CD8-positive, alpha-beta T cell (primary cell): ENCODE measurements at regions of chr1 and their contacts with region 1.

Region 1: DNA sequence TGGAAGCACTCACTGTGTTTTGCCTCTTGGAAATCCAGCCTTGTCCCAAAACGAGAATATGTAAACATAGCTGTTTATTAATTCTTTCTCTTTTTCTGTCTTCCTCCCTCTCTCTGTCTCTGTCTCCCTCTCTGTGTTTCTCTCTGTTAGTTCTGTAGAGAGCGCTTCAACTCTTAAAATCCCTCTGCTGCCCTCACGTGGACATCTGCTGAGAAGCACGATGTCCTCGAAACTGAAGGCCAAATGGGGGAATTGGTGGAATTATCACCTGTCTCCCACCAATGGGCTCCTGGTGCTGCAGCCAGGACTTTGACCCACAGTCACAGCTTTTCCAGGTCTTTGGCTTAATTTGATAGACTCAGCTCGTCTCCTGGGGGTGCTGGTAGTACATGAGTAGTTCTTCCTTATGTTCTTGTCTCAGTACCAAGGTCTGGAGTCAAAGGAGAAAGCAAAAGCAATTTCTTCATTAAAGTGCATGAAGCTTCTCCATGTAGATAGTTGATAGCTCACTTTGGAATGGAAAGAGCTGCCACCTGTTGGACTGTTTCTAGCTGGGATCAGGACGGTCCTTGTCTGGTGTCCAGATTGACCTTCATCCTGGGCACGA is 5.5 kb upstream of the GBP6 start:
- DNase-seq: peak; percentile 70 to 88 (median 84)
- ATAC-seq: peak; percentile 96
- H3K4me3 ChIP-seq: no peak overlapping the region
- H3K4me3 Mint-ChIP-seq: peak overlapping the region; percentile 8
- H3K27ac ChIP-seq: no peak overlapping the region
- H3K27ac Mint-ChIP-seq: peak overlapping the region; percentile 1
- H3K4me1 ChIP-seq: peaks cover 7% of the 10 kb centered on the region
- H3K4me1 Mint-ChIP-seq: peaks cover 35% of the 10 kb centered on the region
- H3K27me3 ChIP-seq: no peaks in the 10 kb centered on the region
- H3K27me3 Mint-ChIP-seq: no peaks in the 10 kb centered on the region
- CTCF ChIP-seq: peak; percentile 95

Region 2: DNA sequence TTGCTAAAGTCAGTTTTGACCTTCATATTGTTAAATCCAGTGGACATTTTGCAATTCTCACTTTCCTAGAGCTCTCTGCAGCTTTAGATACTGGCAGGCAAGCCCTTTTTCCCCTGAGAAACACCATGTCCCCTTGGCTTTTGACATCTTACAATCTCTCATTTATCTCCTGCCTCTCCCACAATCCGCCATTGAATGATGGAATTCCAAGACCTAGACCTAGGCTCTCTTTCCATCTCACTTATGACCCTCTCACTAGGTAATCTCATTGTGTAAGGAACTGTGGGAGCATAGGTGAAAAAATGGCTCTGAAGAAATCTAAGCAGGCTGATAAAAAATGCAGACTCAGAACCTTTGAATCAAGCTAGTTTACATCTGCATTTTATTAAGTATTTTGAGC is 368.0 kb before region 1 on chr1:
- CTCF ChIA-PET with region 1: interaction called, 28 read pairs
- POLR2A ChIA-PET with region 1: no interaction called
- intact Hi-C with region 1: no loop called
- DNase-seq: no peak
- ATAC-seq: no peak
- H3K4me3 ChIP-seq: no peak overlapping the region
- H3K4me3 Mint-ChIP-seq: no peak overlapping the region
- H3K27ac ChIP-seq: peak overlapping the region in 1 of 2 experiments; percentile 17
- H3K27ac Mint-ChIP-seq: peak overlapping the region; percentile 77
- H3K4me1 ChIP-seq: peaks cover 22% of the 10 kb centered on the region
- H3K4me1 Mint-ChIP-seq: peaks cover 43% of the 10 kb centered on the region
- H3K27me3 ChIP-seq: no peaks in the 10 kb centered on the region
- H3K27me3 Mint-ChIP-seq: no peaks in the 10 kb centered on the region
- CTCF ChIP-seq: no peak

Region 3: GRCh38 chr1:89022167-89022959 is 336.0 kb before region 1 on chr1 and contains the start of gene GBP3:
- CTCF ChIA-PET with region 1: interaction called, 10 read pairs
- POLR2A ChIA-PET with region 1: no interaction called
- intact Hi-C with region 1: no loop called
- DNase-seq: peak in 3 of 9 experiments; percentile 14 to 73 (median 54)
- ATAC-seq: peak; percentile 83
- H3K4me3 ChIP-seq: peak within 1 kb of the TSS; percentile 52 to 59
- H3K4me3 Mint-ChIP-seq: peak within 1 kb of the TSS; percentile 89
- H3K27ac ChIP-seq: peak within 1 kb of the TSS; percentile 50 to 87
- H3K27ac Mint-ChIP-seq: peak within 1 kb of the TSS; percentile 94
- H3K4me1 ChIP-seq: peaks cover 23% of the 10 kb centered on the region
- H3K4me1 Mint-ChIP-seq: peaks cover 47% of the 10 kb centered on the region
- H3K27me3 ChIP-seq: no peaks in the 10 kb centered on the region
- H3K27me3 Mint-ChIP-seq: no peaks in the 10 kb centered on the region
- CTCF ChIP-seq: no peak
- total RNA-seq, gene GBP3: 18.6 to 21.6 TPM

Region 4: DNA sequence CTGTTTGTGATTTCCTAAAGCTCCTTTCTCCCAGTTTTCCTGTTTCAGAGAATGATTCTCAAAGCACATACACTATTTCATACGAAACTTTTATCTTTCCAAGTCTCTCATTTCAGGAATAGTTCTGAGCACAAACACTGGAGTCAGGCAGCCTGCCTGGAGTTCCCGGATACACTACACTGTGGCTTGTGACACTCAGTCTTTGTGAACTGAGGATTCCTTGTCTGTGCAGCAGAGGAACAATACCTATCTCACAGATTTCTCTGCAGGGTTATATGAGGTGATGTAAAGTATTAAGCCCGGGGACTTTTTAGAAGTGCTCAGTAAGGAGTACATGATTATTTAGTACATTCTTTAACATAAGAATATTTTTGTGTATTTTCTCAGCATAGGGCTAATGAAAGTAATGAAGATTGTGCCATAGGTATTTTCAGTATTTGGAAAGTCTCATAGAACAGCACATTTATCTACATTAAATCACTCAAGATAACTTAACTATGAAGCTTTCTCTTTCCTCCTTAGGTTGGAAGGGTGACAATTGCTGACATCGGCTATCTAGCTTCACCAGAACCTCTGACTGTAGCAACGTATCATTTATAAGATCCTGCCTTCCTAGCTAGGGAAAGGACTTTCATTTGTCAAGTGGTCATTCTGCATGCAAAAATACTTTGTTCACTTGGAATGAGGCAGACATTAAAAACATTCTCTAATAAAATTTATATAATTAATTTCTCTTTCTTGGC is 245.3 kb before region 1 on chr1:
- CTCF ChIA-PET with region 1: interaction called, 14 read pairs
- POLR2A ChIA-PET with region 1: interaction called, 3 read pairs
- intact Hi-C with region 1: no loop called
- DNase-seq: no peak
- ATAC-seq: no peak
- H3K4me3 ChIP-seq: no peak overlapping the region
- H3K4me3 Mint-ChIP-seq: no peak overlapping the region
- H3K27ac ChIP-seq: no peak overlapping the region
- H3K27ac Mint-ChIP-seq: peak overlapping the region; percentile 46
- H3K4me1 ChIP-seq: peaks cover 4% of the 10 kb centered on the region
- H3K4me1 Mint-ChIP-seq: peaks cover 41% of the 10 kb centered on the region
- H3K27me3 ChIP-seq: no peaks in the 10 kb centered on the region
- H3K27me3 Mint-ChIP-seq: no peaks in the 10 kb centered on the region
- CTCF ChIP-seq: no peak

Region 5: GRCh38 chr1:89179343-89179742 is 179.0 kb before region 1 on chr1:
- CTCF ChIA-PET with region 1: interaction called, 11 read pairs
- POLR2A ChIA-PET with region 1: no interaction called
- intact Hi-C with region 1: no loop called
- DNase-seq: no peak
- ATAC-seq: no peak
- H3K4me3 ChIP-seq: no peak overlapping the region
- H3K4me3 Mint-ChIP-seq: no peak overlapping the region
- H3K27ac ChIP-seq: no peak overlapping the region
- H3K27ac Mint-ChIP-seq: no peak overlapping the region
- H3K4me1 ChIP-seq: no peaks in the 10 kb centered on the region
- H3K4me1 Mint-ChIP-seq: no peaks in the 10 kb centered on the region
- H3K27me3 ChIP-seq: no peaks in the 10 kb centered on the region
- H3K27me3 Mint-ChIP-seq: no peaks in the 10 kb centered on the region
- CTCF ChIP-seq: no peak

Region 6: DNA sequence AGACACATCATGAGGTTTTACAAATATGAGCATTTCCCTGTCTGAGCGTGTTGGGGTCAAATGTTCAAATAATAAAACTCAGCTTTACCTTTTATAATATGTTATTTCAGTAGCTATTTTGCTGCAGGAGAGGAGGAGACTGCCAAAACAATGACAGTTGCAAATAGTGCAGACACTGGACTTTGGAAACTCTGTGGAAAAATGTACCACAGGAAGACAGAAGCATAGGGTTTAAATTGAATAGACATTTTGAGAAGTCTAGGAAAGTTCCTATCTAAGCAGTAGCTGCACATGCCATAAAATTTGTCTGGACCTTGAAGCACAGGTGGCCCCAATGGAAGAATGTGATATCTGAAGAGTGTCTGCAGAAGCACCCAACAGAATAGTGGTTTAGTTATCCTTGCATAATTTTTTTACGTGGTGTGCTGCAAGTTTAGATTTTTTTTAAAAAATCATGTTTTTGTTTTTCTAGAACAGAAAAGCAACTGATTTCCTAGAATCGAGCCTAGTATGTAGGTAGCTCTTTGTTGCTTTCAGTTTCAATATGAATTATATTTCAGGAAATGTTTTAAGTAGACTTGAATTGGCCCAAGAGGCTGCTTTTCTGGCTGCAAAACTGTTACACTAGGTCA is 71.7 kb before region 1 on chr1:
- CTCF ChIA-PET with region 1: interaction called, 20 read pairs
- POLR2A ChIA-PET with region 1: no interaction called
- intact Hi-C with region 1: no loop called
- DNase-seq: peak in 2 of 9 experiments; percentile 33 to 63
- ATAC-seq: peak; percentile 70
- H3K4me3 ChIP-seq: peak overlapping the region; percentile 25 to 30
- H3K4me3 Mint-ChIP-seq: peak overlapping the region; percentile 74
- H3K27ac ChIP-seq: peak overlapping the region; percentile 26 to 75
- H3K27ac Mint-ChIP-seq: peak overlapping the region; percentile 90
- H3K4me1 ChIP-seq: peaks cover 48% of the 10 kb centered on the region
- H3K4me1 Mint-ChIP-seq: peaks cover 61% of the 10 kb centered on the region
- H3K27me3 ChIP-seq: no peaks in the 10 kb centered on the region
- H3K27me3 Mint-ChIP-seq: no peaks in the 10 kb centered on the region
- CTCF ChIP-seq: no peak

Region 7: GRCh38 chr1:89335486-89335885 is 22.9 kb before region 1 on chr1:
- CTCF ChIA-PET with region 1: no interaction called
- POLR2A ChIA-PET with region 1: no interaction called
- intact Hi-C with region 1: no loop called
- DNase-seq: no peak
- ATAC-seq: no peak
- H3K4me3 ChIP-seq: no peak overlapping the region
- H3K4me3 Mint-ChIP-seq: no peak overlapping the region
- H3K27ac ChIP-seq: no peak overlapping the region
- H3K27ac Mint-ChIP-seq: no peak overlapping the region
- H3K4me1 ChIP-seq: no peaks in the 10 kb centered on the region
- H3K4me1 Mint-ChIP-seq: peaks cover 6% of the 10 kb centered on the region
- H3K27me3 ChIP-seq: no peaks in the 10 kb centered on the region
- H3K27me3 Mint-ChIP-seq: no peaks in the 10 kb centered on the region
- CTCF ChIP-seq: no peak

Region 8: GRCh38 chr1:89454845-89455521 is 96.6 kb after region 1 on chr1:
- CTCF ChIA-PET with region 1: interaction called, 18 read pairs
- POLR2A ChIA-PET with region 1: no interaction called
- intact Hi-C with region 1: loop called (anchors 2 to 5 kb)
- DNase-seq: peak; percentile 15 to 77 (median 60)
- ATAC-seq: peak; percentile 94
- H3K4me3 ChIP-seq: no peak overlapping the region
- H3K4me3 Mint-ChIP-seq: no peak overlapping the region
- H3K27ac ChIP-seq: no peak overlapping the region
- H3K27ac Mint-ChIP-seq: no peak overlapping the region
- H3K4me1 ChIP-seq: no peaks in the 10 kb centered on the region
- H3K4me1 Mint-ChIP-seq: peaks cover 7% of the 10 kb centered on the region
- H3K27me3 ChIP-seq: no peaks in the 10 kb centered on the region
- H3K27me3 Mint-ChIP-seq: peaks cover 7% of the 10 kb centered on the region
- CTCF ChIP-seq: peak; percentile 96

Region 9: GRCh38 chr1:89743788-89744187 is 385.4 kb after region 1 on chr1:
- CTCF ChIA-PET with region 1: no interaction called
- POLR2A ChIA-PET with region 1: no interaction called
- intact Hi-C with region 1: no loop called
- DNase-seq: no peak
- ATAC-seq: no peak
- H3K4me3 ChIP-seq: no peak overlapping the region
- H3K4me3 Mint-ChIP-seq: no peak overlapping the region
- H3K27ac ChIP-seq: no peak overlapping the region
- H3K27ac Mint-ChIP-seq: no peak overlapping the region
- H3K4me1 ChIP-seq: peaks cover 20% of the 10 kb centered on the region
- H3K4me1 Mint-ChIP-seq: peaks cover 44% of the 10 kb centered on the region
- H3K27me3 ChIP-seq: no peaks in the 10 kb centered on the region
- H3K27me3 Mint-ChIP-seq: no peaks in the 10 kb centered on the region
- CTCF ChIP-seq: no peak